Mucosa of descending colon (tissue), 3 donors: ENCODE measurements at regions of chr2 and their contacts with region 1.

Region 1: GRCh38 chr2:231925303-231926179 is 655 bp downstream of the NPPC start:
- DNase-seq: peak; percentile 79 to 89 (median 85)
- ATAC-seq: peak; percentile 93
- H3K4me3 ChIP-seq: no peak overlapping the region
- H3K4me1 ChIP-seq: peaks cover 14% of the 10 kb centered on the region
- CTCF ChIP-seq: peak; percentile 85

Region 2: DNA sequence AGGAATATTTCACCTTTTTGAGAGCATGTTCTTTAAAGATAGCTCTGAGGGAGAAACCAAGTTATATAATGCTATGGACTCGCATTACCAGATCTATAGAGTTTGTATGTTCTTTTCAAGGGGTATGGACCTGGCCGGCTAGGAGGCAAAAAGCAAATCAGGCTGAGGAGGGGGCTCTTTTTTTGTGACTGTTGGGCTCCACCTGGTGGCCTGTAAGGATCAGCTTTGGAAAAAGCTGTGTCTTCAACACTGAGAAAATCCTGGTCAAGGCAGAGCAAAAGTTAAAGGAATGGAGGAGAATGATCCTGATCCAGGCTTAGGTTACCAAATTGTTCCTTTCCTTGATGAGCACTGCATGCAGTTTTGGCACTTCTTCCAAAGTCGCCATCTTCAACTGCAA is 216.5 kb after region 1 on chr2:
- intact Hi-C with region 1: loop called in 1 of 2 experiments (anchors 5 kb)
- DNase-seq: peak in 1 of 3 donors; percentile 28
- ATAC-seq: no peak
- H3K4me3 ChIP-seq: no peak overlapping the region
- H3K4me1 ChIP-seq: no peaks in the 10 kb centered on the region
- CTCF ChIP-seq: no peak

Region 3: DNA sequence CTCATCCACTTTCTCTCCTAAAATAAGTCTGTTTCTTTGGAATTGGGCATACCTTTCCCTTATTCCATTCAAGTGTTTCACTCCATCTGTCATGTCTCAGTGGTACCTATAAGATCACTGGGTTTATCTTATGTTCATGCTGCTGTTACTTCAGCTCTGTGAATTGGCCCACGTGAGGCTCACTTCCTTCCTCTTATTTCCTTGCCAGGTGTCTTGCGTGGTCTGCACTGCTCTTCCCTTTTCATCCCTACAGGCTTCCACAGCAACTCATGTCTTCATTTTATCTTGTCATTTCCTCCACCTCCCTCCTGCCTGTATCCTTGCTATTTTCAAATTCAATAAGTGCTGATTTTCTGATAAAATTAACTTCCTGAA is 293.9 kb after region 1 on chr2:
- intact Hi-C with region 1: no loop called
- DNase-seq: no peak
- ATAC-seq: no peak
- H3K4me3 ChIP-seq: no peak overlapping the region
- H3K4me1 ChIP-seq: no peaks in the 10 kb centered on the region
- CTCF ChIP-seq: no peak

Region 4: GRCh38 chr2:232327105-232328041 is 401.8 kb after region 1 on chr2:
- intact Hi-C with region 1: loop called (anchors 5 to 10 kb)
- DNase-seq: peak; percentile 81 to 89 (median 87)
- ATAC-seq: peak; percentile 90
- H3K4me3 ChIP-seq: no peak overlapping the region
- H3K4me1 ChIP-seq: no peaks in the 10 kb centered on the region
- CTCF ChIP-seq: peak; percentile 81

Region 5: DNA sequence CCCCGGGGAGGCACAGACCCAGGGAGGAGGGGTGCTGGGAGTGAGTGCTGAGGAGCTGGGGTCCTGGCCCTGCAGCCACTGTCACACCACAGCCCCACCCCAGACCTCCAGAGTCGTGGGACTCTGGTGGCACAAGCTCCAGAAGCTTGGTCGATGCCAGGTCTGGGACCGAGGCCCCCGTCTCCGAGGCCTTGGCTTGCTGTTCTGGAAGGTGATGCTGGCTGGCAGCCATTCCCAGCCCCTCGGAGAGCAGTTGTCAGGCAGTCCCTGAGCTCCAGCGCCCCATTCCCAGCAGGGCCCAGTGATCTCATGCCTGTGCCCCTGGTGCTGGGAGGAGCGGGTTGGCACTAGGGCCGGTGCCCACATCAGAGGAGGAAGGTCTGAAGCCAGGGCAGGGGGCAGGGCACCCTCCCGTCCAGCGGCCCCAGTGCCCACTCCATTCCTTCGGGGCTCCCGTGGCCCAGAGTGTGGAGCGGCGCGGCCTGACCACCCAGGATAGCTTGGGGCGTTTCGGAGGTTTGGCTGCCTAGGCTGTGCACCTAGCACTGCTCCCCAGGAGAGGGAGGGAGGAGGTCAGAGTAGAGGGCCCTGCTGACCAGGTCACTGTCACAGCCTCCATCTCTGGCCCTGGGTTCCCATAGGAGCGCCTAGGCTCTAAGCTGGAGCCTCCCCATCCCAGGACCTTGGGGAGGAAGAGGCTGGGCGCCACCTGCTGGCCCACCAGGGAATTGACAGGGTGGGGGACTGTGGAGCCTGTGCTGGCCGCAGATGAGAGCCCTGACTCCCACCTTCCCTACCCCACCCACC is 513.6 kb after region 1 on chr2:
- intact Hi-C with region 1: loop called in 1 of 2 experiments (anchors 10 kb)
- DNase-seq: peak in 1 of 3 donors; percentile 53
- ATAC-seq: peak; percentile 74
- H3K4me3 ChIP-seq: no peak overlapping the region
- H3K4me1 ChIP-seq: no peaks in the 10 kb centered on the region
- CTCF ChIP-seq: peak; percentile 53